ENCODE measurements at regions of chr1 and their contacts with region 1.

Region 1: DNA sequence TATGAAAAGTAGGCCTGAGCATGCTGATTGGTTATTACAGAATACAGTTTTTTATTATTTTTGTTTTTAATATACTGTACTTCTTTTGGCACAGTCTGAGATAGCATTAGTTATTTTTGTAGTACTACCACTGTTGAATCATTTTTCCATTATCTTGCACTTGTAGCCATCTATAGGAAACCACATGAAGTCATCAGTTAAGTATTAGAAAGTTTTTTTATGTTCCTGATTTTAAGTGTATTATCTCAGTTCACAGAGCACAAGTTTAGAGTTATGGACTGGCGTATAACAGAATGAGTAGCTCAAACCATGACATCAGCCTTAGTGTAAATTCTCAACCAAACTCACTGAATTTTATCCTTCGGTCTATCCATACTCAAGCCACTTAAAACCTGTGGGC is 22.8 kb downstream of the DHX9 start:
- DNase-seq: no peak
- ATAC-seq: peak; percentile 68
- H3K4me3 Mint-ChIP-seq: no peak overlapping the region
- H3K27ac Mint-ChIP-seq: peak overlapping the region; percentile 76
- H3K4me1 Mint-ChIP-seq: peaks cover 51% of the 10 kb centered on the region
- H3K27me3 Mint-ChIP-seq: no peaks in the 10 kb centered on the region
- CTCF ChIP-seq: no peak

Region 2: GRCh38 chr1:182845379-182845778 is 16.6 kb before region 1 on chr1:
- CTCF ChIA-PET with region 1: interaction called, 3 read pairs
- POLR2A ChIA-PET with region 1: interaction called, 18 read pairs
- intact Hi-C with region 1: no loop called
- DNase-seq: peak; percentile 24
- ATAC-seq: peak; percentile 65
- H3K4me3 Mint-ChIP-seq: no peak overlapping the region
- H3K27ac Mint-ChIP-seq: peak overlapping the region; percentile 77
- H3K4me1 Mint-ChIP-seq: peaks cover 88% of the 10 kb centered on the region
- H3K27me3 Mint-ChIP-seq: no peaks in the 10 kb centered on the region
- CTCF ChIP-seq: no peak

Region 3: GRCh38 chr1:183385340-183386144 is 523.5 kb after region 1 on chr1:
- CTCF ChIA-PET with region 1: no interaction called
- POLR2A ChIA-PET with region 1: no interaction called
- intact Hi-C with region 1: no loop called
- DNase-seq: no peak
- ATAC-seq: no peak
- H3K4me3 Mint-ChIP-seq: no peak overlapping the region
- H3K27ac Mint-ChIP-seq: no peak overlapping the region
- H3K4me1 Mint-ChIP-seq: no peaks in the 10 kb centered on the region
- H3K27me3 Mint-ChIP-seq: peaks cover 15% of the 10 kb centered on the region
- CTCF ChIP-seq: no peak

Measured in activated CD8-positive, alpha-beta T cell treated with anti-CD3 and anti-CD28 coated beads for 36 hours (primary cell).